ENCODE measurements at regions of chr1 and their contacts with region 1.

Region 1: GRCh38 chr1:155250633-155251449 is 4.4 kb downstream of the ENTREP3 start:
- DNase-seq: peak; percentile 90 to 94 (median 91)
- H3K4me3 ChIP-seq: peak overlapping the region in 1 of 2 donors; percentile 46
- H3K4me3 Mint-ChIP-seq: peak overlapping the region; percentile 35 to 81 (median 55)
- H3K27ac ChIP-seq: peak overlapping the region; percentile 20
- H3K27ac Mint-ChIP-seq: peak overlapping the region in 4 of 7 donors; percentile 54 to 92 (median 70)
- H3K4me1 ChIP-seq: peaks cover 21% of the 10 kb centered on the region
- H3K4me1 Mint-ChIP-seq: peaks cover 12 to 35% (median 20%) of the 10 kb centered on the region in 4 donors
- H3K27me3 ChIP-seq: no peaks in the 10 kb centered on the region
- H3K27me3 Mint-ChIP-seq: no peaks in the 10 kb centered on the region

Region 2: DNA sequence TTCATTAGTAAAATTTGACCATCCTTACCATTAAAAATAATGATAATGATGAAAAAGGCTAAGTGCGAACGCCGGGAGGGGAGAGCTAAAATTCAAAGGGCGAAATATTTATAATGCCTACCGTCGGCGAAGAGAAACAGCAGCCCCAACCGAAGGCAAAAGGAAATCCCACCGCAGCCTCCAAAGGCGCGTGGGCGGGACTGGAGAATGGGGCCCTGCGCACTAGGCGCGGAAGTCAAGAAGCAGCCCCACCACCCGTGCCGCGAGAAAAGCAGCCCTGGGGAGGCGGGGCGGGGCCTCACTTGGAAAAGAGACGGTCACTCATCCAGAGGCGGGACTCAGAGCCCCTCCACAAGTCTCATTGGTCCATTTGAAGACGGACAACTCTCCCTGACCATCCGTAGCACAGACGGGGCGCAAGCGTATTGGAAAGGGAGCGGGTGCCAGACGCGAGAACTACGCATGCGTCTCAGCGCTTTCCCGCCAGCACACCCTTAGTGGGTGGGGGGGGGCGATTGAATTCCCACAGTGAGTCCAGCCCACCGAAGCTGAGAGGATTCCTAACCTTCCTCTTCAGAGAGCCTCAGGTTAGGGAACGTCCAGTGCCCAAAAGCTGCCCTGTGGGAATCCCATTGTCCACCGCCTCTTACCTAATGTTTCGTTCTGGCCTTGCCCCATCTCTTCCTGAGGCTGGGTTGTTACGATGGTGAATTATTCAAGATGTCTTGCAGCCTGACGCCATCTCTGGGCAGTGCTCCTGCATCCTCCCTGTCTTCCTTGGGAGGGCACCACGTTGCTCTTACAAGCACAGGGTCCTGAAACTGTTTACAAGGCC is 23.4 kb before region 1 on chr1:
- CTCF ChIA-PET with region 1: interaction called, 5 read pairs
- POLR2A ChIA-PET with region 1: interaction called, 47 read pairs
- intact Hi-C with region 1: no loop called
- DNase-seq: peak; percentile 94 to 99 (median 98)
- H3K4me3 ChIP-seq: peak overlapping the region; percentile 80 to 86
- H3K4me3 Mint-ChIP-seq: peak overlapping the region; percentile 78 to 93 (median 88)
- H3K27ac ChIP-seq: peak overlapping the region; percentile 69
- H3K27ac Mint-ChIP-seq: peak overlapping the region; percentile 77 to 97 (median 93)
- H3K4me1 ChIP-seq: peaks cover 19% of the 10 kb centered on the region
- H3K4me1 Mint-ChIP-seq: peaks cover 14 to 34% (median 25%) of the 10 kb centered on the region in 4 donors
- H3K27me3 ChIP-seq: no peaks in the 10 kb centered on the region
- H3K27me3 Mint-ChIP-seq: no peaks in the 10 kb centered on the region

Region 3: GRCh38 chr1:155277070-155277895 is 26.4 kb after region 1 on chr1 and contains the start of gene HCN3:
- CTCF ChIA-PET with region 1: interaction called, 44 read pairs
- POLR2A ChIA-PET with region 1: interaction called, 14 read pairs
- intact Hi-C with region 1: loop called (anchors 1 kb)
- DNase-seq: peak; percentile 80 to 90 (median 81)
- H3K4me3 ChIP-seq: peak within 1 kb of the TSS; percentile 62 to 81
- H3K4me3 Mint-ChIP-seq: peak within 1 kb of the TSS; percentile 78 to 86 (median 83)
- H3K27ac ChIP-seq: peak within 1 kb of the TSS; percentile 55
- H3K27ac Mint-ChIP-seq: peak within 1 kb of the TSS; percentile 42 to 91 (median 81)
- H3K4me1 ChIP-seq: peaks cover 35% of the 10 kb centered on the region
- H3K4me1 Mint-ChIP-seq: peaks cover 23 to 41% (median 32%) of the 10 kb centered on the region in 4 donors
- H3K27me3 ChIP-seq: no peaks in the 10 kb centered on the region
- H3K27me3 Mint-ChIP-seq: no peaks in the 10 kb centered on the region
- total RNA-seq, gene HCN3: 4.9 to 5.3 TPM

Region 4: DNA sequence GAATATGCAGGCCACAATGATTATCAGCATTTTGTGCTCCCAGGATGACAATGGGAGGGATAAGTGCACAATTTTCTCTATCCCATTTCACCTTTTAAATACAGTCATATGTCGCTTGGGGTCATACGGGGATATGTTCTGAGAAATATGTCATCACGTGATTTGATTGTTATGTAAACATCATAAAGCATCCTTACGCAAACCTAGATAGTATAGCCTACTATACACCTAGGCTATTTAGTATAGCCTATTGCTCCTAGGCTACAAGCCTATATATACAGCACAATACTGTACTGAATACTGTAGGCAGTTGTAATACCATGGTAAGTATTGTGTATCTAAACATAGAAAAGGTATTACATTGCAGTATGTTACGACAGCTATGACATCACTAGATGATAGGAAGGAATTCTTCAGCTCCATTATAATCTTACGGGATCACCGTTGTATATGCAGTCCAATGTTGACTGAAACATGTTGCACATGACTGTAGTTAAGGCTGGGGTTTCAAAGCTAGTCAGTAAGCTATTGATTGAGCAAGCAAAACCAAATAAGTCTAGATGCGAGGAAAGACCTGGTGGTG is 88.8 kb after region 1 on chr1:
- CTCF ChIA-PET with region 1: interaction called, 27 read pairs
- POLR2A ChIA-PET with region 1: no interaction called
- intact Hi-C with region 1: no loop called
- DNase-seq: no peak
- H3K4me3 ChIP-seq: no peak overlapping the region
- H3K4me3 Mint-ChIP-seq: no peak overlapping the region
- H3K27ac ChIP-seq: no peak overlapping the region
- H3K27ac Mint-ChIP-seq: peak overlapping the region in 2 of 7 donors; percentile 4 to 70
- H3K4me1 ChIP-seq: no peaks in the 10 kb centered on the region
- H3K4me1 Mint-ChIP-seq: no peaks in the 10 kb centered on the region
- H3K27me3 ChIP-seq: no peaks in the 10 kb centered on the region
- H3K27me3 Mint-ChIP-seq: no peaks in the 10 kb centered on the region

Region 5: GRCh38 chr1:155596864-155597263 is 346.0 kb after region 1 on chr1:
- CTCF ChIA-PET with region 1: interaction called, 90 read pairs
- POLR2A ChIA-PET with region 1: interaction called, 3 read pairs
- intact Hi-C with region 1: no loop called
- DNase-seq: no peak
- H3K4me3 ChIP-seq: no peak overlapping the region
- H3K4me3 Mint-ChIP-seq: no peak overlapping the region
- H3K27ac ChIP-seq: no peak overlapping the region
- H3K27ac Mint-ChIP-seq: no peak overlapping the region
- H3K4me1 ChIP-seq: peaks cover 8% of the 10 kb centered on the region
- H3K4me1 Mint-ChIP-seq: peaks cover 2 to 12% (median 9%) of the 10 kb centered on the region in 4 donors
- H3K27me3 ChIP-seq: no peaks in the 10 kb centered on the region
- H3K27me3 Mint-ChIP-seq: no peaks in the 10 kb centered on the region

Measured in CD4-positive, alpha-beta memory T cell (primary cell).